ENCODE measurements at regions of chr3 and their contacts with region 1.

Region 1: GRCh38 chr3:195609229-195609628 is 25.5 kb upstream of the APOD start:
- DNase-seq: no peak
- H3K4me3 Mint-ChIP-seq: no peak overlapping the region
- H3K27ac Mint-ChIP-seq: peak overlapping the region; percentile 62
- H3K4me1 Mint-ChIP-seq: peaks cover 21% of the 10 kb centered on the region
- H3K27me3 Mint-ChIP-seq: no peaks in the 10 kb centered on the region

Region 2: GRCh38 chr3:195450731-195451229 is 158.4 kb before region 1 on chr3:
- intact Hi-C with region 1: no loop called
- DNase-seq: no peak
- H3K4me3 Mint-ChIP-seq: no peak overlapping the region
- H3K27ac Mint-ChIP-seq: no peak overlapping the region
- H3K4me1 Mint-ChIP-seq: peaks cover 20% of the 10 kb centered on the region
- H3K27me3 Mint-ChIP-seq: peaks cover 6% of the 10 kb centered on the region

Region 3: GRCh38 chr3:195556387-195556786 is 52.8 kb before region 1 on chr3:
- intact Hi-C with region 1: no loop called
- DNase-seq: no peak
- H3K4me3 Mint-ChIP-seq: no peak overlapping the region
- H3K27ac Mint-ChIP-seq: no peak overlapping the region
- H3K4me1 Mint-ChIP-seq: peaks cover 38% of the 10 kb centered on the region
- H3K27me3 Mint-ChIP-seq: no peaks in the 10 kb centered on the region

Region 4: GRCh38 chr3:195587824-195588223 is 21.4 kb before region 1 on chr3:
- intact Hi-C with region 1: loop called (anchors 2 kb)
- DNase-seq: no peak
- H3K4me3 Mint-ChIP-seq: no peak overlapping the region
- H3K27ac Mint-ChIP-seq: no peak overlapping the region
- H3K4me1 Mint-ChIP-seq: peaks cover 8% of the 10 kb centered on the region
- H3K27me3 Mint-ChIP-seq: no peaks in the 10 kb centered on the region

Measured in activated T-helper 2 cell treated with anti-CD3 and anti-CD28 coated beads, Interferon-gamma antibody, Interleukin-2, Interleukin-4, amounts not matched to agents 10 μg/mL and 5 μg/mL and 100 μg/mL, durations not matched to agents 14 hours and 24 hours and 36 hours (primary cell).